K562 (cell line): ENCODE measurements at regions of chr19 and their contacts with region 1.

Region 1: GRCh38 chr19:36489118-36489919 is at the start of gene ZNF566:
- DNase-seq: peak; percentile 90 to 95 (median 92)
- ATAC-seq: peak; percentile 97
- H3K4me3 ChIP-seq: peak within 1 kb of the TSS; percentile 57
- H3K27ac ChIP-seq: peak within 1 kb of the TSS; percentile 91
- H3K4me1 ChIP-seq: peaks cover 4 to 11% of the 10 kb centered on the region in 2 experiments; a peak in 3 of 5 replicates
- H3K27me3 ChIP-seq: no peaks in the 10 kb centered on the region
- CTCF ChIP-seq: peak; percentile 4 to 19 (median 18); a peak in 2 of 6 replicates
- EP300 ChIP-seq: no peak
- POLR2A ChIP-seq: peak; percentile 90
- RAD21 ChIP-seq: peak in 1 of 2 experiments; percentile 1; a peak in 2 of 4 replicates
- polyA plus RNA-seq, gene ZNF566: 9.9 to 11.2 TPM

Region 2: DNA sequence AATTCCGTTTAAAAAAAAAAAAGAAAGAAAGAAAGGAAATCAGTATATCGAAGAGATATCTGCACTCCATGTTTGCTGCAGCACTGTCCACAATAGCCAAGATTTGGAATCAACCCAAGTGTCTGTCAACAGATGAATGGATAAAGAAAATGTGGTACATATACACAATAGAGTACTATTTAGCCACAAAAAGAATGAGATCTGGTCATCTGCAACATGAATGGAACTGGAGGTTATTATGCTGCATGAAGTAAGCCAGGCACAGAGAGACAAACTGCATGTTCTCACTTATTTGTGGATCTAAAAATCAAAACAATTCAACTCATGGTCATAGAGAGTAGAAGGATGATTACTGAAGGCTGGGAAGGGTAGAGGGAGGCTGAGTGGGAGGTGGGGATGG is 291.2 kb before region 1 on chr19:
- CTCF ChIA-PET with region 1: no interaction called
- POLR2A ChIA-PET with region 1: no interaction called
- in situ Hi-C with region 1: no loop called
- intact Hi-C with region 1: loop called (anchors 5 kb)
- DNase-seq: no peak
- ATAC-seq: no peak
- H3K4me3 ChIP-seq: no peak overlapping the region
- H3K27ac ChIP-seq: no peak overlapping the region
- H3K4me1 ChIP-seq: no peaks in the 10 kb centered on the region
- H3K27me3 ChIP-seq: no peaks in the 10 kb centered on the region
- CTCF ChIP-seq: no peak
- EP300 ChIP-seq: no peak
- POLR2A ChIP-seq: no peak
- RAD21 ChIP-seq: no peak

Region 3: DNA sequence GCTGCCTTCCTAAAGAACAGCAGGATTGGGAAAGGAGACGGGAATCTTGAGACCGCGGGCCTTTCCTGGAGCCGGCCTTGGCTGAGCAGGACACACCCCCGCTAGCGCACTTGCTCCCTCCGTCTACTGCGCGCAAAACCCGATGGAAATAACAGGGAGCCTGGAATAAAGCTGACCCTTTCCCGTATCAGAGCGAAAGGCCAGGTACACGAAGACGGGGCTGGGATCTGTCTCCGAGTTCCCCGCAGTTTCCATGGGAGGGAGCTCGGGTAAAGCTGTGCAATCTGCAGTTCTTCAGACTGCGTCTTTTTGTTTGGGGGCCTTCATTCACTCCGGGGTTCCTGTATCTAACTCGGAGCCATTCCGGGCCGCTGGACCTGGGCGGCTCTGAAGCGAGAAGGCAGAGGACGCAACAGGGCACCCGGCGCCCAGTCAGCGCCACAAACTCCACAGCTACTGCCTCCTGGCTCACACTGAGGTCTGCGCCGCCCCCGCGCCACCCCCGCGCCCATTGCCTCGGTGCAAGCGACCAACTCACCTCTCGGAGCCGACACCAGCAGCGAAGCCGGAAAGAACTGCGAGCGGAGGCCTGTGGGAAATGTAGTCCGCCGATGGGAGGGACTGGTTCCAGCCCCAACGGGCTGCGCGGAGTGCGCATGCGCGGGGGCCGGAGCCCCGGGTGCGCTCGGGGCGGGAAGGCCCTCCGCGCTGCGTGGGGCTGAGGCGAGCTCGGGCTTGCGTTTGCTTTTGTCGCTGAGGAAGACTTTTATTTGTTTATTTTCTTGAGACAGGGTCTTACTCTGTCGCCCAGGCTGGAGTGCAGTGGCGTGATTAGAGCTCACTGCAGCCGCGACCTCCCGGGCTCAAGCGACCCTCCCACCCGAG is 110.5 kb before region 1 on chr19 and contains the start of gene ZFP14:
- CTCF ChIA-PET with region 1: no interaction called
- POLR2A ChIA-PET with region 1: interaction called, 10 read pairs
- in situ Hi-C with region 1: no loop called
- intact Hi-C with region 1: loop called (anchors 2 kb)
- DNase-seq: peak; percentile 92 to 98 (median 98)
- ATAC-seq: peak; percentile 100
- H3K4me3 ChIP-seq: peak within 1 kb of the TSS; percentile 65
- H3K27ac ChIP-seq: peak within 1 kb of the TSS; percentile 66; the same call in 2 of the 3 replicates
- H3K4me1 ChIP-seq: peaks cover 0 to 10% of the 10 kb centered on the region in 2 experiments; a peak in 2 of 5 replicates
- H3K27me3 ChIP-seq: no peaks in the 10 kb centered on the region
- CTCF ChIP-seq: peak; percentile 40 to 48 (median 43); a peak in 4 of 6 replicates
- EP300 ChIP-seq: no peak
- POLR2A ChIP-seq: 0 out of 2 replicates have a peak, but pooled peaks have one; percentile 25
- RAD21 ChIP-seq: peak; percentile 25 to 57
- polyA plus RNA-seq, gene ZFP14: 1.6 to 1.7 TPM

Region 4: GRCh38 chr19:36528194-36528920 is 39.0 kb after region 1 on chr19 and contains the start of gene ZNF260:
- CTCF ChIA-PET with region 1: no interaction called
- POLR2A ChIA-PET with region 1: interaction called, 10 read pairs
- in situ Hi-C with region 1: no loop called
- intact Hi-C with region 1: no loop called
- DNase-seq: peak; percentile 89 to 94 (median 92)
- ATAC-seq: peak; percentile 96
- H3K4me3 ChIP-seq: peak within 1 kb of the TSS; percentile 72
- H3K27ac ChIP-seq: peak within 1 kb of the TSS; percentile 99
- H3K4me1 ChIP-seq: peaks cover 3 to 4% of the 10 kb centered on the region in 2 experiments; a peak in 3 of 5 replicates
- H3K27me3 ChIP-seq: no peaks in the 10 kb centered on the region
- CTCF ChIP-seq: peak in 1 of 3 experiments; percentile 13; a peak in 1 of 6 replicates
- EP300 ChIP-seq: 0 out of 2 replicates have a peak, but pooled peaks have one; percentile 1
- POLR2A ChIP-seq: peak; percentile 89
- RAD21 ChIP-seq: no peak; a peak in 1 of 4 replicates
- polyA plus RNA-seq, gene ZNF260: 2.6 to 3.7 TPM